ENCODE measurements at regions of chr1 and their contacts with region 1.

Region 1: DNA sequence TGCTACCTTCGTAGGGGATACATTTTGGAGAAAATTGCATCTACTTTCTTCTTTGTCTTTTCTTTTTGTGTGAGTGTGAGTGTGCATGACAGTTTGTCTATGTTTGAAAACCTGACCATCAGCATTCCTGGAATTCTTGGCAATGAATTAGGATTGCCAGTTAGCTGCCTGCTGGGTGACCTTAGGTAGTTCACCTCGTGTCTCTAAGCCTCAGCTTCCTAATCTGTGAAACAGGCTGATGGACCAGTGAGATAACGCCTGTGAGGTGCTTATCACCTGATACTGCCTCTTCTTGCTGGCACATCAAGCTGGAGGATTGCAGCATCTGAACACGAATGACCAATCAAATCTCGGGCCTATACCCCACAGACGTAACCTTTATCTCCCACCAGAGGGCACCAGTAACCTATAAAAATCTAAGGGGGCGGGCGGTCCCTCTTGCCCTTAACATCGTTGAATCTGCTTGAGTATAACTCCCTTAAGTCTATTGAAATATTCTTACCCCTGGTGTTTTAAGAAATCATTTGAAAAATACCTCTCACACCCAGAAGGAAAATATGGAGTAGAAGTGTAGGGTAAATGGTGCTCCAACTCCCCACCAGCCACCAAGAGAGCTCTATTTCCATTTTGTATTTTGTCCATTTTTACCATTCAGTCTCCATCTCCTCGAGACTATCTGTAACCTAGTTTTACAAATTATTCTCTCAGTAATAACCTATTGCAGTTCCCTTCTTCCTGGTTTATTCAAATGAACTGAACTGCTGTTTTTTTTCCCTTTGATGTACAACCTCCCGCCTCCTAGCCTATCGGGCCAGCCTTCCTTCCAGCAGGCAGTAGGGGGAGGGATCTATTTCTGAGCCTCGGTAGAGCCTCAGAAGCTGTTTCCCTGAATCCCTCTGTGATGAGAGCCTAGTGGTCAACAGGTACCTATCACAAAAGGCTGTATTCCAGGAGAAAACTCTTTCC is 49.7 kb downstream of the MDM4 start:
- DNase-seq: peak in 4 of 5 donors; percentile 70 to 86 (median 77)
- H3K4me3 ChIP-seq: no peak overlapping the region
- H3K27ac ChIP-seq: no peak overlapping the region
- H3K4me1 ChIP-seq: peaks cover 0 to 12% (median 2%) of the 10 kb centered on the region in 3 donors
- H3K27me3 ChIP-seq: no peaks in the 10 kb centered on the region
- CTCF ChIP-seq: peak; percentile 54

Region 2: GRCh38 chr1:204763706-204764427 is 198.0 kb after region 1 on chr1:
- intact Hi-C with region 1: loop called (anchors 10 kb)
- DNase-seq: peak; percentile 77 to 96 (median 78)
- H3K4me3 ChIP-seq: peak overlapping the region in 1 of 3 donors; percentile 26
- H3K27ac ChIP-seq: no peak overlapping the region
- H3K4me1 ChIP-seq: peaks cover 0 to 9% (median 6%) of the 10 kb centered on the region in 3 donors
- H3K27me3 ChIP-seq: no peaks in the 10 kb centered on the region
- CTCF ChIP-seq: peak; percentile 79